ENCODE measurements at regions of chr19 and their contacts with region 1.

Region 1: DNA sequence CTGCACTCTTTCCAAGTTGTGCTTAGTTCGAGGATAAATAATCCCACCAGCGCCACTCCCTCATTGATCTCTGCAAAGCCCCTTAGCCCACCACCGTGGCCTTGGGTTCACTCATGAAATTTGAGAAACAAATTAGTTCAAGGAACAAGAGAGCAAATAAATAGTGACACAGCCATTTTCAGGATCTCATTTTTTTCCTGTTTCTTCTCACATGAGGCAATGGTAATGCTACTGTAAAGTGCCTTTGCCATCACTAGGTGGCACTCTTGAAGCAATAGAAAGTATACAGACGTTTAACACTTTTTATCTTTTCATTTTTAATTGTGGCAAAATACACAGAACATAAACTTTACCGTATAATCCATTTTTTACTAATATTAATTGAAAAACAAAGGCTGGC is 76.8 kb upstream of the ZNF835 start:
- DNase-seq: no peak
- ATAC-seq: peak; percentile 38

Region 2: GRCh38 chr19:57103573-57104277 is 355.3 kb after region 1 on chr19:
- intact Hi-C with region 1: loop called (anchors 10 kb)
- DNase-seq: peak; percentile 64
- ATAC-seq: peak; percentile 71

Measured in Right ventricle myocardium superior (tissue), 1 donor.